ENCODE measurements at regions of chr14 and their contacts with region 1.

Region 1: GRCh38 chr14:61178226-61179060 is 102.7 kb downstream of the TMEM30B start:
- DNase-seq: peak; percentile 95
- H3K4me3 ChIP-seq: peak overlapping the region in 1 of 3 experiments; percentile 42
- H3K27ac ChIP-seq: peak overlapping the region; percentile 99
- H3K4me1 ChIP-seq: peaks cover 40% of the 10 kb centered on the region
- H3K27me3 ChIP-seq: no peaks in the 10 kb centered on the region
- CTCF ChIP-seq: no peak
- POLR2A ChIP-seq: peak; percentile 45

Region 2: DNA sequence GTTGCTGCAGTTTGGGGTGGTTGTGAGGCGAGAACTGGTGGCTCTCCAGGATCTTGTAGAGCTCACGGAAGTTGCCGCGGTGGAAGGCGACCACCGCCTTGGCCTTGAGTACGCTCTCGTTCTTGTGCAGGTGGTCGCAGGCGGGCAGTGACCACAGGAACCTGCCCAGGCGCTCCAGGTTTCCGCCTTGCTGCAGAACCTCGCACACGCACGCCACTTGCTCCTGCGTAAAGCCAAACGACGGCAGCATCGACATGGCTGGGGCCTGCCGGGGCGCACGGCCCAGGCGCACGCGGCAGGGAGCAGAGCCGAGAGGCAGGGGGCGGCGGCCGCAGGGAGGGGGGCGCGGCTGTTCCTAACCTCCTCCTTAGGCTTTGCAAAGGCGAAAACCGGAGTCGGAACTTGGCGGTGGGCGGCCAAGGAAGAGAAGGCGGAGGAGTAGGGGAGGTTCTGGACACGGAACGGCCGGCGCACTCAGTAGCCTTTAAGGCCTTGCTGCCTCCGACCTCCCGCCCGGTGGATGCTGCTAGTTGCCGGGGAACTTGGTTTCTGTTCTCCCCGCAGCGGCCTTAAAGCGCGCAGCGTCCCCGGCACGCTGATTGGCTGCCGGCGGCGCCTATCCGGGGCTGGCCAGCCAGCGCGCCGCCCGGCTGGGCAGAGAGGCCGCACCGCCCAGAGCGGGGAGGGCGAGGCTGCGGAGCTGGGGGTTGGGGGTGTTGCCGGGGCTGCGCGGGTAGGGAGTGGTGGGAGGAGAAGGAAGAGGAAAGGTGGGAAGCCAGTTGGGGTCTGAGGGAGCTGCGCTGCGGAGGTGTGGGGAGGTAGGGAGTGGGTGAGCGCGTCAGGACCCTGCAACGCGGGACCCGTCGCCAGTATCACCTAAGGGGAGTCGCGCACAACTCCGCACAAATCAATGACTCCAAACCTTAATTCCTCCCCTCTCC is 529.2 kb before region 1 on chr14 and contains the start of gene SIX1:
- CTCF ChIA-PET with region 1: no interaction called
- POLR2A ChIA-PET with region 1: no interaction called
- dilution Hi-C with region 1: no loop called
- intact Hi-C with region 1: loop called (anchors 2 kb)
- DNase-seq: peak; percentile 83
- H3K4me3 ChIP-seq: peak within 1 kb of the TSS; percentile 12 to 47 (median 15)
- H3K27ac ChIP-seq: no peak within 1 kb of the TSS
- H3K4me1 ChIP-seq: peaks cover 25% of the 10 kb centered on the region
- H3K27me3 ChIP-seq: peaks cover 80 to 98% of the 10 kb centered on the region in 2 experiments
- CTCF ChIP-seq: no peak
- POLR2A ChIP-seq: peak; percentile 57
- total RNA-seq, gene SIX1: 0.40 and 0.55 TPM in 2 replicates

Region 3: GRCh38 chr14:60724137-60724619 is 454.3 kb before region 1 on chr14 and contains the start of gene SIX4:
- CTCF ChIA-PET with region 1: no interaction called
- POLR2A ChIA-PET with region 1: no interaction called
- dilution Hi-C with region 1: no loop called
- intact Hi-C with region 1: loop called (anchors 2 kb)
- DNase-seq: peak; percentile 85
- H3K4me3 ChIP-seq: peak within 1 kb of the TSS; percentile 81 to 94 (median 86)
- H3K27ac ChIP-seq: peak within 1 kb of the TSS; percentile 57
- H3K4me1 ChIP-seq: peaks cover 8% of the 10 kb centered on the region
- H3K27me3 ChIP-seq: peaks cover 9 to 16% of the 10 kb centered on the region in 2 experiments
- CTCF ChIP-seq: no peak
- POLR2A ChIP-seq: peak; percentile 75
- total RNA-seq, gene SIX4: 4.7 and 7.5 TPM in 2 replicates

Region 4: DNA sequence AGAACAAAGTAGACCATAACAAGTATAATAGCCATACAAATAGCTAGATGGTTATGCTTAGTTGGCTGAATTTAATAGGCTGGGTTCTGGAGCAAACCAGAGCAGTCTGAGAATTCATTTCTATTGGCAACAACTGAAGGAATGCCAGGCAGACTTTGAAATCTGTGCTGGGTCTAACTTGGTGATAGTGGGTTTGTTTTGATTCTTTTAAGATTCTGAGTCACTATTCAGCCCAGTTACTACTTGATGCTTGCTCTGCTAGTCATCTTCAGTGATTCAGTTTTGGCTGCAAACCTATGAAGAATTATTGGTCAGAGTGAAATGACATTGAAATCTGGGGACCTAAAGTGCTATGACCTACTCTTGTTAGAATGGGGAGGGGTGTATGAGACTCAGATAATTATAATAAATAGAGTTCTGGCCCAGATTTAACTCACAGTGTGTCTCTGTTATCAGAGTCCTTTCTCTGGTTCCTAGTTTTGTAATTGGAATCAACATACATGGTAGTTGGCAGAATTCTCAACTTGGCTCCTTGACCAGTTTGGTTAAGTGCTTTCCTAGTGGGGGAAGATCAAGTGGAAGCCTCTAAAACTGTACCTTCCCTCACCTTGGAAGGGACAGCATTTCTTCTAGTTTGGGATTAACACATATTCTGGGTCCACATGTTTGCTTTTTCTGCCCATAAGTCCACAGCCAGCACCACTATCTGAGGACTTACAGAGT is 400.4 kb before region 1 on chr14:
- CTCF ChIA-PET with region 1: no interaction called
- POLR2A ChIA-PET with region 1: no interaction called
- dilution Hi-C with region 1: no loop called
- intact Hi-C with region 1: no loop called
- DNase-seq: peak; percentile 8
- H3K4me3 ChIP-seq: no peak overlapping the region
- H3K27ac ChIP-seq: no peak overlapping the region
- H3K4me1 ChIP-seq: peaks cover 17% of the 10 kb centered on the region
- H3K27me3 ChIP-seq: no peaks in the 10 kb centered on the region
- CTCF ChIP-seq: no peak
- POLR2A ChIP-seq: no peak

Region 5: GRCh38 chr14:61125867-61126572 is 52.4 kb before region 1 on chr14:
- CTCF ChIA-PET with region 1: interaction called, 4 read pairs
- POLR2A ChIA-PET with region 1: interaction called, 4 read pairs
- dilution Hi-C with region 1: no loop called
- intact Hi-C with region 1: loop called (anchors 1 kb)
- DNase-seq: peak; percentile 80
- H3K4me3 ChIP-seq: no peak overlapping the region
- H3K27ac ChIP-seq: peak overlapping the region; percentile 36
- H3K4me1 ChIP-seq: peaks cover 37% of the 10 kb centered on the region
- H3K27me3 ChIP-seq: no peaks in the 10 kb centered on the region
- CTCF ChIP-seq: no peak
- POLR2A ChIP-seq: no peak

Region 6: GRCh38 chr14:61147831-61148549 is 30.5 kb before region 1 on chr14:
- CTCF ChIA-PET with region 1: interaction called, 4 read pairs
- POLR2A ChIA-PET with region 1: interaction called, 3 read pairs
- dilution Hi-C with region 1: no loop called
- intact Hi-C with region 1: loop called (anchors 1 kb)
- DNase-seq: peak; percentile 85
- H3K4me3 ChIP-seq: no peak overlapping the region
- H3K27ac ChIP-seq: peak overlapping the region; percentile 84
- H3K4me1 ChIP-seq: peaks cover 28% of the 10 kb centered on the region
- H3K27me3 ChIP-seq: no peaks in the 10 kb centered on the region
- CTCF ChIP-seq: no peak
- POLR2A ChIP-seq: no peak

Measured in endothelial cell of umbilical vein (primary cell).